ENCODE measurements at regions of chr11 and their contacts with region 1.

Region 1: GRCh38 chr11:117426269-117426685 is 98.6 kb downstream of the CEP164 start:
- DNase-seq: peak; percentile 37 to 44
- ATAC-seq: peak in 1 of 2 experiments; percentile 88; a peak in 3 of 6 replicates
- H3K4me3 ChIP-seq: no peak overlapping the region
- H3K27ac ChIP-seq: no peak overlapping the region
- H3K4me1 ChIP-seq: no peaks in the 10 kb centered on the region
- CTCF ChIP-seq: peak; percentile 70
- EP300 ChIP-seq: no peak
- POLR2A ChIP-seq: no peak
- RAD21 ChIP-seq: peak; percentile 78 to 89

Region 2: DNA sequence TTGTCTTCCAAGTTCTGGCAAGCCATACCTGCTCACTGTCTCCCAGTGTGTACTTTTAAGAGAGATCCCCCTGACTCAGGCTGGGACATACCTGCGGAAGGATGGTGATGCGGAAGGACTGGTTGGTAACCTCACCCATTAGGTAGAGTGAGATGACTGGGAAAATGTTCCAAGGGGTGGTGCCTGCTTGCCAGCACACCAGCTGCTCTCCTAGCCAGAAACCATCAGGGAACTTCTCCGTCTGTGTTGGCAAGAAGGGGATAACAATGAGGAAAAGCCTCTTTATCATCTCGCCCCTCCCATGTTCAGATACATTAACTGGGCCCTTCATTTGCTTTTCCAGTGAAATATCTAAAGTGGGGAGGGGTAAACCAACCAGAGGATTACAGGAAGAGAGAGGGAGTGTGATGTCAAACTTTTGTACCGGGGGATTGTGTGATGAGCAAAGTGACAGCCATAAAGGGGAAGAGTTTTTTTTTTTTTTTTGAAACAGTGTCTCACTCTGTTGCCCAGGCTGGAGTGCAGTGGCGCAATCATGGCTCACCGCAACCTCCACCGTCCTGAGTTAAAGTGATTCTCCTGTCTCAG is 135.4 kb before region 1 on chr11 and contains the start of gene BACE1-AS:
- CTCF ChIA-PET with region 1: no interaction called
- POLR2A ChIA-PET with region 1: no interaction called
- DNase-seq: no peak
- ATAC-seq: no peak
- H3K4me3 ChIP-seq: no peak within 1 kb of the TSS
- H3K27ac ChIP-seq: no peak within 1 kb of the TSS
- H3K4me1 ChIP-seq: no peaks in the 10 kb centered on the region
- CTCF ChIP-seq: no peak
- EP300 ChIP-seq: no peak
- POLR2A ChIP-seq: no peak
- RAD21 ChIP-seq: no peak
- polyA plus RNA-seq, gene BACE1-AS: 4.4 and 5.4 TPM in 2 replicates

Region 3: DNA sequence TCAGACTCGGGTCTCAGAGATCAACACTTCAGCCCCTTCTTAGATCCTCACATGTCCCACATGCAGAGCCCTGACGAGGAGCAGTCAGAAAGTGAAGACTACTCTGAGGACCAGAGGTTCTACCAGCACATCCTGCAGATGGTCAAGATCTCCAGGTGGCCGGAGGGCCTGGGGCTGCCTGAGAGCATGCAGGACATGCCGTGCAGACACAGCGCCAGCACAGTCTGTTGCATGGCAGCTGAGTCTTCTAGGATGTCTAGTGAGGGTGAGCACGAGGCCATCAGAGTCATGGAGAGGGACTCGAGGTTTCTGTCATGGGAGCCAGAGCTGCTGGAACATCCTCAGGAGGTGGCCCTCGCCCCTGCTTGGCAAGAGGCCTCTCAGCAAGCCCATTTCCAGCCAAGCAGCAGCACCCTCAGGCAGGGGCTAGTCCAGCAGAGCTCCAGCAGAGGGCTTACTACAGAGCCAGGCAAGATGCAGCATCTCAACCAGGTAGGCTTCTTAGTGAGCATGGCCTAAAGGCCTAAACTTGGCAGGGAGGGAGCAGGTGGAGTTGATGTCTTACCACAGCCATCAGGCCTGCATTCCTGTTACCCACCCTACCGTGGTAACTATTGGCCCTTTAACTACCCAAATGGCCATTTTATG is 70.0 kb before region 1 on chr11:
- CTCF ChIA-PET with region 1: no interaction called
- POLR2A ChIA-PET with region 1: no interaction called
- DNase-seq: peak in 1 of 2 experiments; percentile 6
- ATAC-seq: peak; percentile 43 to 58; a peak in 3 of 6 replicates
- H3K4me3 ChIP-seq: no peak overlapping the region
- H3K27ac ChIP-seq: no peak overlapping the region
- H3K4me1 ChIP-seq: no peaks in the 10 kb centered on the region
- CTCF ChIP-seq: no peak
- EP300 ChIP-seq: no peak
- POLR2A ChIP-seq: no peak
- RAD21 ChIP-seq: no peak

Region 4: GRCh38 chr11:117410861-117411710 is 15.2 kb before region 1 on chr11:
- CTCF ChIA-PET with region 1: interaction called, 77 read pairs
- POLR2A ChIA-PET with region 1: no interaction called
- DNase-seq: no peak
- ATAC-seq: no peak; a peak in 1 of 6 replicates
- H3K4me3 ChIP-seq: no peak overlapping the region
- H3K27ac ChIP-seq: no peak overlapping the region
- H3K4me1 ChIP-seq: no peaks in the 10 kb centered on the region
- CTCF ChIP-seq: no peak
- EP300 ChIP-seq: no peak
- POLR2A ChIP-seq: no peak
- RAD21 ChIP-seq: no peak

Region 5: DNA sequence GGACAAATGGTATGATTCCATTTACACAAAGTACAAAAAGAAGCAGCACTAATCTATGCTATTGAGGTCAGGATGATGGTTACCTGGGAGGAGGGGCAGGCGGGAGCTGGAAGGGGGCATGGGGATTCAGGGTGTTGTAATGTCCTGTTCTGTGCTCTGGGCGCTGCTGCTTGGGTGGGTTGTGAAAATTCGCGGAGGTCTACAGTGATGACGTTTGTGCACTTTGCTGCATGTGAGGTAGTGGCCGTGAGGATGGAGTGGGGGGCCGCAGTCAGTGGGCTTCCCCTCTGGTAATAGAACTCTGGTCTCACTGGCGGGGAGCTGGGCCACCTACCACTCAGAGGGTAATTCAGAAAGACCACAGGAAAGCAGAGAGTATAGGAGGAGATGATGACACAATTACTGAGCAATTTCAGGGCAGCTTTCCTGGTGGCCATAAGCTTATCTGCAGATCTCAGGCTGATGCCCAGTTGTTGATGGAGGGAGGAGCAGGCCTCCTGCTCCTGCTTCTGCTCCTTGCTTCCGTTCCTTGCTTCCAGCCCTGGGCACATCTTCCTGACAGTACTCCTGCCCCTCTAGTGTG is 22.9 kb after region 1 on chr11:
- CTCF ChIA-PET with region 1: interaction called, 25 read pairs
- POLR2A ChIA-PET with region 1: no interaction called
- DNase-seq: no peak
- ATAC-seq: 0 out of 6 replicates have a peak, but pooled peaks of 1 of the 2 experiments have one; percentile 43
- H3K4me3 ChIP-seq: no peak overlapping the region
- H3K27ac ChIP-seq: no peak overlapping the region
- H3K4me1 ChIP-seq: no peaks in the 10 kb centered on the region
- CTCF ChIP-seq: no peak
- EP300 ChIP-seq: no peak
- POLR2A ChIP-seq: no peak
- RAD21 ChIP-seq: no peak

Region 6: DNA sequence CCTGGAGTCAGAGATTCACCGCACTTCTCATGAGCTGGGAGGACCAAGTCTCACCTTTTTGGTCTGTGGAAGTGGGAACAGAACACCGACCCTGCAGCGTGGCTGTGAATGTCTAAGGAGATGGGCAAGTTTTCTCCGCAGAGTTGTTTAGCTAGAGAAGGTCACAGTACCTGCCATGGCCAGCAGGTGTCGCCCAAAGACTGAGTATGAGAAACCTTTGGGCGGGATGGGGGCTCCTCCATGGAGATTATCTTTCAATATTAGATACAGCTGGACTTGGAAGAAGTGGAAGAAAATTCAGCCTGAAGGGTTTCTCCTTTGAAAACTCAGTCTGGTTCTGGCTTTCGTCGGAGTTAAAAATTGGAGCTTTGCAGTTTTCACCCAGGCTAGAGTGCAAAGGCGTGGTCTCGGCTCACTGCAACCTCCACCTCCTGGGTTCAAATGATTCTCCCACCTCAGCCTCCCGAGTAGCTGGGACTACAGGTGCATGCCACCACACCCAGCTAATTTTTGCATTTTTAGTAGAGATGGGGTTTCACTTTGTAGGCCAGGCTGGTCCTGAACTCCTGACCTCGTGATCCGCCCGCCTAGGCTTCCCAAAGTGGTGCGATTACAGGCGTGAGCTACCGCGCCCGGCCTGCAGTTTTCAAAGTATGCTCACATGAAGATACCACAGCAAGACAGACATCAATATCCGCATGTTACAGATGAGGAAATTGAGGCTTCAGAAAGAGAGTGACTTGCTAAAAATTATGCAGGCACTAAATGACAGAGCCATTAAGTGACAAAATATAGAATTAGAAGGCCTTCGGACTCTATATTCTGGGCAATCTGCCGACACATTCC is 381.4 kb after region 1 on chr11:
- CTCF ChIA-PET with region 1: interaction called, 105 read pairs
- POLR2A ChIA-PET with region 1: no interaction called
- DNase-seq: peak; percentile 48 to 54
- ATAC-seq: peak in 1 of 2 experiments; percentile 57; a peak in 3 of 6 replicates
- H3K4me3 ChIP-seq: no peak overlapping the region
- H3K27ac ChIP-seq: no peak overlapping the region; a peak in 1 of 6 replicates
- H3K4me1 ChIP-seq: peaks cover 13% of the 10 kb centered on the region; the same call in 2 of the 3 replicates
- CTCF ChIP-seq: peak; percentile 71
- EP300 ChIP-seq: no peak
- POLR2A ChIP-seq: no peak
- RAD21 ChIP-seq: peak; percentile 71 to 76

Region 7: DNA sequence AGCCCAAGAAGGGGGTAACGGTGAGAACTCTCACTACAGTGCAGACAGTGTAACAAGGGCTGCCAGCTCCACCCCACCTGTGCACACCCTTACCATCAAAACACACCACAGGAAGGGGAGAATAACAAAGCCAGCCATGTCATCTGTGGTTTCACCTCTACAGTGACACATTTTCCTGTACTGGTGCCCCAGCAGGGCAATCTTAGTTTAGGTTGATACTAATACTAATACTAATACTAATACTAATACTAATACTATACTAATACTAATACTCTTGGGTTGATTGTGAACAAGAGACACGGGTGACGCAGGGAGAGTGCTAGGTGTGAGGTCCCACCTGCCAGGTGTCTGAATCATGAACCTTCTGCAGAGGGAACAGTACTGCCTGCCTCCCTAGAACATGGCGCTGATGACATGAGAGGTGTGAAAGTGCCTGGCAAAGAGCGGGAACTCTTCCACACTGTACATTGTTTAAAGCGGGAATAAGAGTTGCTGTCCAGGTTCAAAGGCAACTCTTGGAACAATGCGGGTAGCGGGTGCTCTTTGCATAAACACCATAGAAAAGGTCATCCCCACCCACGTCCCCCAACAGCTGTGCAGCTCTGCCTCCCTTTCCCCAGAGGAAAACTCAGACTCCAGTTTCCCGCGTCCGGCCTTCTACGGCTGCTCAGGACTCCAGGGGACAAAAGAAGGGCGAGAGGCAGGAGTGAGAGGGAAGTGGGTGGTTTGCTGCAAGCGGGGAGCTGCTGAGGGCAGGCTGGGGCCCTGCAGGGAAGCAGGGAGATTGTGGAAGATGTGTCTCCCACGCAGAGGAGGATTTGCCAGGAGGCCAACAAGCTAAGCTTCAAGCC is 625.6 kb after region 1 on chr11:
- CTCF ChIA-PET with region 1: interaction called, 17 read pairs
- POLR2A ChIA-PET with region 1: no interaction called
- DNase-seq: no peak
- ATAC-seq: no peak
- H3K4me3 ChIP-seq: no peak overlapping the region
- H3K27ac ChIP-seq: no peak overlapping the region
- H3K4me1 ChIP-seq: no peaks in the 10 kb centered on the region
- CTCF ChIP-seq: no peak
- EP300 ChIP-seq: no peak
- POLR2A ChIP-seq: no peak
- RAD21 ChIP-seq: no peak

Measured in A549 (cell line).